ENCODE measurements at regions of chr18 and their contacts with region 1.

Region 1: DNA sequence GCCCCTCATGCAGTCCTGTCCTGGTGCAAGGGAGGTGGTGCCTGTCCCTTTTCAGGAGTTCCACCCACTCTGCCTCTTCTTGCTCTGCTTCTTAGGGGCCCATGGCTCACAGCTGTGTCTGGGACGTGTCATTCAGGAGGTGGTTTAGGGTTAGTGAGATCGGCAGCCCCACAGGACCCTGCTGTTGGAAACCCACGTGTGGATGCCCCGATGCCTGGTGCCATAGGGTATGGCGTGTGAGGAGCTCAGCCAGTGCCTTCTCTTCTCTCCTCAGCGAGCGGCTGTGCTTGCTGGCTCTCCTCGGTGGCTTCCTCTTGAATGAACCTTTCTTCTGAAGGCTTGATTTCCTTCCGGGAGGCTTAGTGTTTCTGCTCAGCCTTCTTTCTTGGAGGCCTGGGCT is 55.2 kb downstream of the LDLRAD4 start:
- DNase-seq: no peak
- ATAC-seq: no peak
- H3K4me3 ChIP-seq: no peak overlapping the region
- H3K27ac ChIP-seq: no peak overlapping the region
- H3K4me1 ChIP-seq: peaks cover 4 to 8% of the 10 kb centered on the region in 2 donors
- H3K27me3 ChIP-seq: no peaks in the 10 kb centered on the region

Region 2: DNA sequence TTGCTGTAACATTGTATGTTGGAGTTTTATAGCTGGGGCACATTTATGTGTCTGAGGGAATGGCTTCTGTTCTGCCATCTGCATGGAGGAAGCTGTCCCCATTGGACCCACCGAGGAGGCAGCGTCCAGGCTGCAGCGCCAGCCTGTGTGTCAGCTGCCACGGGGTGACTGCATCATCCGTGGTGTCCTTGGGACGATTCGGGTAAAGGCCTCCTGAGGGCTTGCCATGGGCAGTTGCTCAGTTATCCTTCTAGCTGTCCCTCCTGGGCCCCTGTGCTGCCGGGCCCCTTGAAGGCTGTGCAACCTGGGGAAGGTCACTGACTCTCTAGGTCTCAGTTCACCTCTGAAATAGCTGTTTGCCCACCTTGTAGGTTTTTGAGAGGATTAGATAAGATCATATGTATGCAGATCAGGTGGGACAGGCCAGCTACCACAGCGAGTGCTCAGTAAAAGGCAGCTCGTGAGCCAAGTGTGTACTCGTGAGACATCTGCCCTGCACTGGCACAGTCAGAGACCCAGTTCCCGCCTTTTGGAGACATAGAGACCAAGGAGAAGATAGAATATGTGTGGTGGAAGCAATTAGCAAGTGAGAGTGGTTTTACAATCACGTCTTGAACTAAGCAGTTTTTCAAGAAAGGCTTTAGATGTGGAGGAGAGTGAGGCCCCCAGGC is 44.7 kb before region 1 on chr18:
- intact Hi-C with region 1: loop called (anchors 2 to 5 kb)
- DNase-seq: no peak
- ATAC-seq: no peak
- H3K4me3 ChIP-seq: no peak overlapping the region
- H3K27ac ChIP-seq: no peak overlapping the region
- H3K4me1 ChIP-seq: no peaks in the 10 kb centered on the region
- H3K27me3 ChIP-seq: no peaks in the 10 kb centered on the region

Region 3: DNA sequence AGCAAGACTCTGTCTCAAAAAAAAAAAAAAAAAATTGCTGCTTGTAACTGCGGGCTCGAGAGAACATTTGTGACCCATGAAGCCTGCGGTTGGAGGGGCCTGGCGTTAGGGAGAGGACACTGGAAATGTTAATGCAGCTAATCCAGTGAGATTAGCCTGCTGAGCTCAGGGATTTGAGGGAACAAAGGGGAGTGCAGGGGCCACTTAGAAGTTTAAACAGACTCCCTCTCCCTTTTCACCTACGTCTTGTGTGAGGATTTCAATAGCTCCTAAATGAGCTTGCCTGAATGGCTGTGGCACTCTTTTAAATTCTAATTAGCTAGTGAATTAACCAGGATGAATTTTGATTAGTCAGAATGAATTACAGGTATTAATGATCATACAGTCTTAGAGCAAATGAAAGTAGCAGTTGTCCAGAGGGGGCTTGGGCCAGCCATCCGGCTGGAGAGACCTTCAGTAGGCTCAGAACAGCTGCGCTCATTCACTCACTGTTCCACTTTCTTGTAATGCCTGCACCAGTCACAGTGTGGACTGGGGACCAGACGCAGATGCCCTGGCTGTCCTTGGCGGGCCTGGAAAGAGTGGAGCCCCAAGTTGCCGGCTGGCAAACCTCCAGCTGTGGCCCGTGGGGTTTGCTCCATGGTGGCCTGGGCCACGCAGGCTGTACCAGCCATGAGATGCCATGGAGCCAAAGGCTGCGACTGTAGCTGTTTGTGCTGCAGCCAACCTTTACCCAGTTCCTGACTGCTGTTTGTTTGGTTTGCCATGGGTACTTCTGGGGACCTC is 34.4 kb before region 1 on chr18:
- intact Hi-C with region 1: no loop called
- DNase-seq: no peak
- ATAC-seq: no peak
- H3K4me3 ChIP-seq: no peak overlapping the region
- H3K27ac ChIP-seq: no peak overlapping the region
- H3K4me1 ChIP-seq: no peaks in the 10 kb centered on the region
- H3K27me3 ChIP-seq: no peaks in the 10 kb centered on the region

Measured in aorta (tissue), 5 donors.